Activated CD4-positive, alpha-beta memory T cell treated with anti-CD3 and anti-CD28 coated beads for 36 hours (primary cell): ENCODE measurements at regions of chr3 and their contacts with region 1.

Region 1: GRCh38 chr3:16884084-16884747 is 539 bp upstream of the PLCL2 start:
- DNase-seq: peak; percentile 84
- H3K4me3 Mint-ChIP-seq: peak overlapping the region; percentile 93
- H3K27ac Mint-ChIP-seq: peak overlapping the region; percentile 93
- H3K4me1 Mint-ChIP-seq: peaks cover 23% of the 10 kb centered on the region
- H3K27me3 Mint-ChIP-seq: no peaks in the 10 kb centered on the region

Region 2: GRCh38 chr3:16264708-16265454 is 619.3 kb before region 1 on chr3 and contains the starts of genes DPH3 and OXNAD1:
- CTCF ChIA-PET with region 1: no interaction called
- POLR2A ChIA-PET with region 1: no interaction called
- intact Hi-C with region 1: loop called (anchors 10 kb)
- DNase-seq: peak; percentile 99
- H3K4me3 Mint-ChIP-seq: peak within 1 kb of the TSS; percentile 93
- H3K27ac Mint-ChIP-seq: peak within 1 kb of the TSS; percentile 94
- H3K4me1 Mint-ChIP-seq: peaks cover 36% of the 10 kb centered on the region
- H3K27me3 Mint-ChIP-seq: no peaks in the 10 kb centered on the region
- total RNA-seq, gene DPH3: 23.4 TPM
- total RNA-seq, gene OXNAD1: 23.5 to 24.0 TPM

Region 3: DNA sequence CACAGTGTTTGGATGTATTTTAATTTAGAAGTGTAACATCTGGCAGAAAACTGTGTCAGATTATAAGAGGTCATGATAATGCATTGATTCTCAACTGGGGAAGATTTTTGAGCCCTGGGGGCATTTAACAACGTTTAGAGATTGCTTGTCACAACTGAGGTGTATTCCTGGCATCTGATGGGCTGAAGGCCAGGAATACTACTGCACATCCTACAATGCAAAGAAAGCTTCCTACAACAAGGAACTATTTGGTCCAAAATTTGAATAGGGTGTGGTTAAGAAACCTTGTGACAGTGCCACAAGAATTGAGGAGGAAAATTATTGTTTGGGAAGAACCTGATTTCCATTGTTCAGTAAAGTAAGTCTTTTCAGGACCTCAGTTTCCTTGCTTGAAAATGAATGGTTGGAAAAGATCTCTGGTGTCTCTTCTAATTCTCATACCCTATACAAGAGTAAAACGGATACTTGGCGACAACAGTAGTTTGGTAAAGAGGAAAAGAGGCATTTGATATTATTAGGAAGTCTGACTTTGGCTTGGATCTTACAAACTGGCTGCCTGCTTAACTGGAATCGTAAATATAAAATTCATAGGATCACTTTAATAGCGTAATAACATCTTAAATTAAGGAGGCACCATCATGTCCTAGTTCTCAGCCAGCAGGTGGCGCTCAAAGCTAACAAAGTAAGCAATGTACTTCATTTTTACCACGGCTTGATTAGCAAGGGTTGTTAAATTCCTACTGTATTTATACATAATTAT is 283.3 kb before region 1 on chr3:
- CTCF ChIA-PET with region 1: interaction called, 4 read pairs
- POLR2A ChIA-PET with region 1: interaction called, 3 read pairs
- intact Hi-C with region 1: loop called (anchors 2 kb)
- DNase-seq: peak; percentile 81
- H3K4me3 Mint-ChIP-seq: no peak overlapping the region
- H3K27ac Mint-ChIP-seq: no peak overlapping the region
- H3K4me1 Mint-ChIP-seq: peaks cover 24% of the 10 kb centered on the region
- H3K27me3 Mint-ChIP-seq: peaks cover 10% of the 10 kb centered on the region

Region 4: DNA sequence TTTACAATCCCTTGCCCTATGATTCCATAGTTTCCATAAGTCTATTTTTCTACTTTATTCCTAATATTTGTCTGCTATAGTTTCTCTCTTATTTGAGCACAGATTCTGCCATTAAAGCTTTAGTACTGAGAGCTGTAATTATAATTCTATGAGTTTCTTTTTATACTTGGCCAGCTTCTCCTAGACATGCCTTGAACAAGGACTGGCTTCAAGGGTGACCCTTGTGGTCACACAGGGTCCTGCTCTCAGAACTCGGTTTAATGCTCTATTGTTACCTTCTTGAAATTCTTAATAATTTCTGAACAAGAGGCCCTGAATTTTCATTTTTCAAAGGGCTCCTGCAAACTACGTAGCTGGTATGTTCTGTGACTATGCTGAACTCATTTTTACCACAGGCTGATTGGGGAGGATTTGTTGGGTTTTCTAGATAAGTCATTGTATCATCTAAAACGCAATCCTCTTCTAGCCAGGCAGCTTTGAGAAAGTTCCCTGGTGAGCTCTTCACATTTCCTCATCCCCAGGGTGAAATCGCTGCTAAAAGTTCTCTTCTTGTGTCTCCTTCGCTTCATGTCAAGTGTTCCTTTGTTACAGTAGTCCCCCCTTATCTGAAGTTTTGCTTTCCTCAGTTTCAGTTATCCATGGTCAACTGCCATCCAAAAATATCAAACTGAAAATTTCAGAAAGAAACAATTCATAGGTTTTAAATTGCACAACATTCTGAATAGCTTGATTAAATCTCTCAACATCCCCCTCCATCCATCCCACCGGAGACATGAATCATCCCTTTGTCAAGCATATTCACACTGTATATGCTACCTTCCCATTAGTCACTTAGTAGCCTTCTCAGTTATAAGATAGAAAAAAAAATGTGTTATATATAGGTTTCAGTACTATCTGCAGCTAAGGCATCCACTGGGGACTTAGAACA is 12.0 kb before region 1 on chr3:
- CTCF ChIA-PET with region 1: interaction called, 11 read pairs
- POLR2A ChIA-PET with region 1: interaction called, 3 read pairs
- intact Hi-C with region 1: no loop called
- DNase-seq: no peak
- H3K4me3 Mint-ChIP-seq: no peak overlapping the region
- H3K27ac Mint-ChIP-seq: no peak overlapping the region
- H3K4me1 Mint-ChIP-seq: peaks cover 2% of the 10 kb centered on the region
- H3K27me3 Mint-ChIP-seq: peaks cover 7% of the 10 kb centered on the region

Region 5: DNA sequence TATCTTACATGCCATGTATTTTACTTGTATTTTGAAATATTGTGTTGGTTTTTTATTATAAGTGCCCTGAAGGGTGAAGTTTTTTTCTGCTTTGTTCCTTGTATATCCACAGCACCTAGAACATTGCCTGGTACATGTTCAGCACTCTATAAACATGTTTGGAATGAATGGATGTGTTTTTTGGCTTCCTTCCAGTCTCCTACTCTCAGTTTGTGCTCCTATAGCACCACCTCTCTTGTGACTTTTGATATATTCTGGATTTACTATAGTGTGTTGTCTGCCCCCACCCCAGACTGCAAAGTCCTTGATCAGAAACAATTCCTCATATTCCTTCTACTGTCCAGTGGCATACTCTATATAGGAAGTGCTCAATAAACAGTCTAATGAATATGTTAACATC is 61.1 kb after region 1 on chr3:
- CTCF ChIA-PET with region 1: interaction called, 3 read pairs
- POLR2A ChIA-PET with region 1: no interaction called
- intact Hi-C with region 1: loop called (anchors 5 kb)
- DNase-seq: no peak
- H3K4me3 Mint-ChIP-seq: no peak overlapping the region
- H3K27ac Mint-ChIP-seq: no peak overlapping the region
- H3K4me1 Mint-ChIP-seq: peaks cover 64% of the 10 kb centered on the region
- H3K27me3 Mint-ChIP-seq: no peaks in the 10 kb centered on the region

Region 6: GRCh38 chr3:17151598-17152373 is 267.6 kb after region 1 on chr3:
- CTCF ChIA-PET with region 1: interaction called, 13 read pairs
- POLR2A ChIA-PET with region 1: interaction called, 3 read pairs
- intact Hi-C with region 1: loop called (anchors 1 kb)
- DNase-seq: peak; percentile 95
- H3K4me3 Mint-ChIP-seq: peak overlapping the region; percentile 60
- H3K27ac Mint-ChIP-seq: peak overlapping the region; percentile 88
- H3K4me1 Mint-ChIP-seq: peaks cover 31% of the 10 kb centered on the region
- H3K27me3 Mint-ChIP-seq: no peaks in the 10 kb centered on the region

Region 7: DNA sequence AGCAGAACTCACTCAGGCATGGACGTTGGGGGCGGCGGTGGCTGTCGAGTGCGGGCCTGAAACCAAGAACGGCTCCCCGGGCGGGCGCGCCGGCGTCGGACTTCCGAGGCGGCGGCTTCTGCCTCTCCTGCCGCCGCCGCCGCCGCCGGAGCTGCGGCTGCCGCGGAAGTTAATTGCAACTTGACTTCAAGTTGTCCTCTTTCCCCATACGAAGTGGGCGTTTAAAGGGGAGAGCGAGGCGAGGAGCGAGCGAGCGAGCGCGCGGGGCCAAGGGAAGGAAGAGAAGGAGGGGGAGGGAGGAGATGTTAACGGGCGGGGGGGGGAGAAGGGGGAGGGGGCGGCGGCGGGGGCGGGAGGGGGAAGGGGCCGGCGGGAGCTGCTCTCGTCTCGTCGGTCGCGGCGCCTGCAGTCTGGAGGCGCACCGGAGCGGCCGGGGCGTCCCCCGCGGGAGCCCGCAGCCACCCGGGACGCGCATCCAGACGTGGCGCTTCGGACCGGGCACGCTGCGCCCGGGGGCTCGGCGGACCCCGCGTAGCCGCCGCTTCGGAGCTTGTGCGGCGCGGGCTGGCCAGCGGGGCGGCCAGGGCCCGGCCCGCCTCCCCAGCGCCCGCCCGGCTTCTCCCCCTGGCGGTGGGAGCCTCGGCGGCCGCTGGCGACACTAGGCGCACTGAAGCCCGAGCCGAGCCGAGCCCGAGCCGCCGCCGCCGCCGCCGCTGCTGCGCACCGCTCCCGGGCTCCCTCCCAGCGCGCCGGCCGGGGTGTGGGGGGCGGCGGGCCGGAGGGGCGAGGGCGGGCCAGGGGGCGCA is 1560.6 kb after region 1 on chr3:
- CTCF ChIA-PET with region 1: no interaction called
- POLR2A ChIA-PET with region 1: no interaction called
- intact Hi-C with region 1: loop called (anchors 10 kb)
- DNase-seq: peak; percentile 87
- H3K4me3 Mint-ChIP-seq: peak overlapping the region; percentile 99
- H3K27ac Mint-ChIP-seq: peak overlapping the region; percentile 99
- H3K4me1 Mint-ChIP-seq: peaks cover 36% of the 10 kb centered on the region
- H3K27me3 Mint-ChIP-seq: no peaks in the 10 kb centered on the region